Caco-2 (cell line): ENCODE measurements at regions of chr7 and their contacts with region 1.

Region 1: DNA sequence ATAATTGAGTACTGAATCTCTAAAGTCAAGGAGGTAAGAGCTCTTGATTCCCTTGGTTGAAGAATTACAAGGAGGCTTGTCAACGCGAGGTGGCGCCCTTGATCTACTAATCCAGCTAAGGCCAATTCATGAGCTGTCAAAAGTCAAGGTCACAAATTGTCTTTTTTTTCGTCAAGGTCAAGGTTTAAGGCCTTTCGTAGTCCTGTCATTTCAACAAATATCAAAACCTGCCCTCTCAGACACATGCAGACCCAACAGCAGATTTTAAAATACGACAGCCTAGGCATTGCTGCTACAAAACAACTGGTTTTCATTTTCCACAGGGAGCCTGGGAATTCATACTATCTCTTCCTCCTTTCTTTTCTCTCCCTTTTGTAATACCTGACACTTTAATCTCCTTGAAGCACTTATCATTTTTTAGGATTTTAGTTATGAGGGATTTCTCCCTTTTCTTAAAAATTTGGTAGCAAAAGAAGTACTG is 3.6 kb downstream of the HOXA13 start:
- DNase-seq: peak; percentile 73 to 82
- H3K4me3 ChIP-seq: no peak overlapping the region
- H3K4me3 Mint-ChIP-seq: no peak overlapping the region
- H3K27ac Mint-ChIP-seq: no peak overlapping the region
- H3K4me1 ChIP-seq: peaks cover 8% of the 10 kb centered on the region
- H3K4me1 Mint-ChIP-seq: no peaks in the 10 kb centered on the region
- H3K27me3 ChIP-seq: peaks cover 2% of the 10 kb centered on the region
- H3K27me3 Mint-ChIP-seq: peaks cover 10% of the 10 kb centered on the region
- CTCF ChIP-seq: peak; percentile 78 to 83

Region 2: GRCh38 chr7:27064159-27064558 is 132.2 kb before region 1 on chr7:
- CTCF ChIA-PET with region 1: no interaction called
- POLR2A ChIA-PET with region 1: no interaction called
- intact Hi-C with region 1: no loop called
- DNase-seq: no peak
- H3K4me3 ChIP-seq: no peak overlapping the region
- H3K4me3 Mint-ChIP-seq: no peak overlapping the region
- H3K27ac Mint-ChIP-seq: no peak overlapping the region
- H3K4me1 ChIP-seq: peaks cover 3% of the 10 kb centered on the region; the same call in 1 of the 2 replicates
- H3K4me1 Mint-ChIP-seq: peaks cover 5% of the 10 kb centered on the region
- H3K27me3 ChIP-seq: no peaks in the 10 kb centered on the region
- H3K27me3 Mint-ChIP-seq: peaks cover 2% of the 10 kb centered on the region
- CTCF ChIP-seq: no peak

Region 3: GRCh38 chr7:27150568-27151340 is 45.6 kb before region 1 on chr7:
- CTCF ChIA-PET with region 1: no interaction called
- POLR2A ChIA-PET with region 1: no interaction called
- intact Hi-C with region 1: no loop called
- DNase-seq: peak; percentile 62 to 85
- H3K4me3 ChIP-seq: peak overlapping the region; percentile 68
- H3K4me3 Mint-ChIP-seq: peak overlapping the region; percentile 94
- H3K27ac Mint-ChIP-seq: peak overlapping the region; percentile 82
- H3K4me1 ChIP-seq: peaks cover 27% of the 10 kb centered on the region
- H3K4me1 Mint-ChIP-seq: no peaks in the 10 kb centered on the region
- H3K27me3 ChIP-seq: no peaks in the 10 kb centered on the region
- H3K27me3 Mint-ChIP-seq: no peaks in the 10 kb centered on the region
- CTCF ChIP-seq: peak; percentile 76 to 92

Region 4: DNA sequence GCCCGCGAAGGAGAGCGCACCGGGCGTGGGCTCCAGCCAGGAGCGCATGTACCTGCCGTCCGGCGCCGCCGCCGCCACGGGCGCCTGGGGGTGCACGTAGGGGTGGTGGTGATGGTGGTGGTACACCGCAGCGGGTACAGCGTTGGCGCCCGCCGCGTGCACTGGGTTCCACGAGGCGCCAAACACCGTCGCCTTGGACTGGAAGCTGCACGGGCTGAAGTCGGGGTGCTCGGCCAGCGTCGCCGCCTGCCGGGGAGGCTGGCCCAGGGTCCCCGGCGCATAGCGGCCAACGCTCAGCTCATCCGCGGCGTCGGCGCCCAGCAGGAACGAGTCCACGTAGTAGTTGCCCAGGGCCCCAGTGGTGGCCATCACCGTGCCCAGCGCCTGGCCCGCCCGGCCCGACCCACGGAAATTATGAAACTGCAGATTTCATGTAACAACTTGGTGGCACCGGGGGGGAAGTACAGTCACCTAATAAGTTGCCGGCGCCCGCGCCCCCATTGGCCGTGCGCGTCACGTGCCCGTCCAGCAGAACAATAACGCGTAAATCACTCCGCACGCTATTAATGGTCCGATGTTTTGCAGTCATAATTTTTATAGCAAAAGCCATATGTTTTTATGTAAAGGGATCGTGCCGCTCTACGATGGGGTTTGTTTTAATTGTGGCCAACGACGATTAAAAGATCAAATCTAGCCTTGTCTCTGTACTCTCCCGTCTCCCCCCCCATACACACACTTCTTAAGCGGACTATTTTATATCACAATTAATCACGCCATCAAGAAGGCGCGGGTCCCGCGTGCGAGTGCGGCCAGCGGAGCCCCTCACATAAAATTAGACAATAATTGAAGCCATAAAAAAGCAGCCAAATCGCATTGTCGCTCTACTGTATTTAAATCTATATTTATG is 31.0 kb before region 1 on chr7 and contains the start of gene HOXA9:
- CTCF ChIA-PET with region 1: no interaction called
- POLR2A ChIA-PET with region 1: no interaction called
- intact Hi-C with region 1: no loop called
- DNase-seq: peak; percentile 81
- H3K4me3 ChIP-seq: peak within 1 kb of the TSS; percentile 66
- H3K4me3 Mint-ChIP-seq: peak within 1 kb of the TSS; percentile 78
- H3K27ac Mint-ChIP-seq: peak within 1 kb of the TSS; percentile 42
- H3K4me1 ChIP-seq: peaks cover 5% of the 10 kb centered on the region
- H3K4me1 Mint-ChIP-seq: peaks cover 7% of the 10 kb centered on the region
- H3K27me3 ChIP-seq: no peaks in the 10 kb centered on the region
- H3K27me3 Mint-ChIP-seq: no peaks in the 10 kb centered on the region
- CTCF ChIP-seq: peak in 1 of 2 experiments; percentile 38
- total RNA-seq, gene HOXA9: 14.4 and 16.7 TPM in 2 replicates

Region 5: GRCh38 chr7:27179503-27180430 is 16.6 kb before region 1 on chr7:
- CTCF ChIA-PET with region 1: interaction called, 13 read pairs
- POLR2A ChIA-PET with region 1: no interaction called
- intact Hi-C with region 1: no loop called
- DNase-seq: peak; percentile 70 to 84
- H3K4me3 ChIP-seq: peak overlapping the region; percentile 47
- H3K4me3 Mint-ChIP-seq: peak overlapping the region; percentile 74
- H3K27ac Mint-ChIP-seq: peak overlapping the region; percentile 31
- H3K4me1 ChIP-seq: peaks cover 12% of the 10 kb centered on the region
- H3K4me1 Mint-ChIP-seq: peaks cover 3% of the 10 kb centered on the region
- H3K27me3 ChIP-seq: peaks cover 2% of the 10 kb centered on the region; the same call in 1 of the 2 replicates
- H3K27me3 Mint-ChIP-seq: peaks cover 2% of the 10 kb centered on the region
- CTCF ChIP-seq: peak; percentile 92 to 93

Region 6: GRCh38 chr7:27576360-27576944 is 380.1 kb after region 1 on chr7:
- CTCF ChIA-PET with region 1: interaction called, 3 read pairs
- POLR2A ChIA-PET with region 1: no interaction called
- intact Hi-C with region 1: loop called (anchors 1 kb)
- DNase-seq: peak in 1 of 2 experiments; percentile 56
- H3K4me3 ChIP-seq: no peak overlapping the region
- H3K4me3 Mint-ChIP-seq: no peak overlapping the region
- H3K27ac Mint-ChIP-seq: no peak overlapping the region
- H3K4me1 ChIP-seq: peaks cover 12% of the 10 kb centered on the region; the same call in 1 of the 2 replicates
- H3K4me1 Mint-ChIP-seq: no peaks in the 10 kb centered on the region
- H3K27me3 ChIP-seq: no peaks in the 10 kb centered on the region
- H3K27me3 Mint-ChIP-seq: no peaks in the 10 kb centered on the region
- CTCF ChIP-seq: peak; percentile 60 to 62

Region 7: DNA sequence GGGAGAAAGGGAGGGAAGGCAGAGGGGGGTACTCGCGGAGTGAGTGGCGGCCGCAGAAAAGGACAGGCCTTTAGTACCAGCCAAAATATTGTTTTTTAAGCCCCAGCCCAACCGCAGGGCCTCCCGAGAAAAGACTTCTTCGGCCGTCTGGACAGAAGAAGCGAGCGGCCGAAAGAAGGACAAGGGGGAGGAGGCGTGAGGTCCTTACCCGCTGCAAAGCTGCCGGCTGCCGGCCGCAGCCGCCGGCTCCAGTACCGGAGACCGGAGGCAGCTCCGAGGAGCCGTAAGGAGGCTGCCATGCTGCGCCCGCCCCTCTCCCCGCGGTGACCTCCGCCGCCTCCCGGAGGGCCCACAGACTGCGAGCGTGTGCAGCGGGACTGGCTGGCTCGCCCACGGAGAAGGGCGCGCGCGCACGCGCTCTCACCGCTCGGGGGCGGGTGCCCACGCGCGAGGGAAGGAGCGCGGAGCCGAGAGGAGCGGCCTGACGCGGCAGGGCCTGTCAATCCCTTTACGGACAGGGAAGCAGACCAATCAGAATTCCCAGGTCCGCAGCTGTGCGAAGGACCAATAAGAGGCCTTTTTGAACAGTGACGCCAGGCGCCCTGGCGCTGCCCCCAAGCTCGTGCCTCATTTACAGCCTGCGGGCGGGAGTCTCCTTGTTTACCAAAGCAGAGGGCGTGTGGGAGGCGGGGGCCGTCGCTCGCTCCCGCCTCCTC is 466.3 kb after region 1 on chr7 and contains the start of gene HIBADH:
- CTCF ChIA-PET with region 1: interaction called, 4 read pairs
- POLR2A ChIA-PET with region 1: no interaction called
- intact Hi-C with region 1: loop called (anchors 1 kb)
- DNase-seq: peak; percentile 98 to 99
- H3K4me3 ChIP-seq: peak within 1 kb of the TSS; percentile 85
- H3K4me3 Mint-ChIP-seq: peak within 1 kb of the TSS; percentile 78
- H3K27ac Mint-ChIP-seq: peak within 1 kb of the TSS; percentile 59
- H3K4me1 ChIP-seq: 0 out of 2 replicates have a peak, but pooled peaks cover 3% of the 10 kb centered on the region
- H3K4me1 Mint-ChIP-seq: peaks cover 7% of the 10 kb centered on the region
- H3K27me3 ChIP-seq: no peaks in the 10 kb centered on the region
- H3K27me3 Mint-ChIP-seq: no peaks in the 10 kb centered on the region
- CTCF ChIP-seq: peak; percentile 9 to 50
- total RNA-seq, gene HIBADH: 33.7 and 37.3 TPM in 2 replicates

Region 8: GRCh38 chr7:27921081-27921836 is 724.9 kb after region 1 on chr7:
- CTCF ChIA-PET with region 1: interaction called, 28 read pairs
- POLR2A ChIA-PET with region 1: no interaction called
- intact Hi-C with region 1: loop called (anchors 1 kb)
- DNase-seq: peak in 1 of 2 experiments; percentile 68
- H3K4me3 ChIP-seq: no peak overlapping the region
- H3K4me3 Mint-ChIP-seq: no peak overlapping the region
- H3K27ac Mint-ChIP-seq: no peak overlapping the region
- H3K4me1 ChIP-seq: no peaks in the 10 kb centered on the region
- H3K4me1 Mint-ChIP-seq: no peaks in the 10 kb centered on the region
- H3K27me3 ChIP-seq: no peaks in the 10 kb centered on the region
- H3K27me3 Mint-ChIP-seq: no peaks in the 10 kb centered on the region
- CTCF ChIP-seq: peak; percentile 66 to 68

Region 9: GRCh38 chr7:28096713-28097112 is 900.4 kb after region 1 on chr7:
- CTCF ChIA-PET with region 1: interaction called, 10 read pairs
- POLR2A ChIA-PET with region 1: no interaction called
- intact Hi-C with region 1: no loop called
- DNase-seq: peak in 1 of 2 experiments; percentile 66
- H3K4me3 ChIP-seq: no peak overlapping the region
- H3K4me3 Mint-ChIP-seq: no peak overlapping the region
- H3K27ac Mint-ChIP-seq: no peak overlapping the region
- H3K4me1 ChIP-seq: no peaks in the 10 kb centered on the region
- H3K4me1 Mint-ChIP-seq: no peaks in the 10 kb centered on the region
- H3K27me3 ChIP-seq: no peaks in the 10 kb centered on the region
- H3K27me3 Mint-ChIP-seq: peaks cover 3% of the 10 kb centered on the region
- CTCF ChIP-seq: peak; percentile 80 to 84